CD4-positive, alpha-beta memory T cell (primary cell): ENCODE measurements at regions of chr1 and their contacts with region 1.

Region 1: GRCh38 chr1:151399890-151400495 is 620 bp downstream of the PSMB4 start:
- DNase-seq: peak in 2 of 5 donors; percentile 22 to 41
- H3K4me3 ChIP-seq: peak overlapping the region; percentile 80 to 85
- H3K4me3 Mint-ChIP-seq: peak overlapping the region; percentile 90 to 99 (median 95)
- H3K27ac ChIP-seq: peak overlapping the region; percentile 97
- H3K27ac Mint-ChIP-seq: peak overlapping the region; percentile 86 to 100 (median 99)
- H3K4me1 ChIP-seq: peaks cover 23% of the 10 kb centered on the region
- H3K4me1 Mint-ChIP-seq: peaks cover 14 to 31% (median 18%) of the 10 kb centered on the region in 4 donors
- H3K27me3 ChIP-seq: no peaks in the 10 kb centered on the region
- H3K27me3 Mint-ChIP-seq: no peaks in the 10 kb centered on the region

Region 2: DNA sequence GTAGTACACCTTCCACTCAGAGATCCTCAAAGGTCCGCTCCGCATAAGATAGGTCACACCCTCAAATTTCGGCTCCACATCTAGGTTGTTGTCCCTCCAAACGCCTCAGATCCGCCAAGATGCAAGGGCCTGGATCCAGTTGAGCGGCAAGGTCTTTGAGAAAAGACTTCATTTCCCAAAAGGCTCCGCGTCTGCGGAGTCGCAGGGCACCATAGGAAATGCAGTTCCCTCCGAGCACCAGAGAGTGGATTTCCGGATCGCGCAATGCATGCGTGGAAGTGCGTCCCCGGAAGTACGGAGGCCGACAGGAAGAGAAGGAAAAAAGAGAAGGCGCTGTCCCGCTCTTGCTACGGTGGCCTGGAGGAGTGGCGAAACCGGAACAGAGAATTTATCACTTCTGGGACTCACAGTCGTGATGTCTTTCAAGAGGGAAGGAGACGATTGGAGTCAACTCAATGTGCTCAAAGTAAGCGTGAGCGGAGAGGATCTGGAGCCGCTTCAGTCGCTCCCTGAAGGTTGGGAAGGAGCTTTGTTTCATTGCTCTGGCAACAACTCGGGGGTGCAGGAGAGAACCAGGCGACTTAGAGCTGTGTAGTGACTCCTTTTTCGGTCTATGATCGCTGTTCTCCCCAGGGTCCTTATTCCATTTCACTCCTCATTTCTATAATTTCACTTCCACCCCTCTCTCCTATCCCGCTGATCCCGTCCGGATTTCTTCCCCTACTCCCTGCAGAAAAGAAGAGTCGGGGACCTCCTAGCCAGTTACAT is 234.1 kb before region 1 on chr1 and contains the starts of genes LYSMD1 and SCNM1:
- CTCF ChIA-PET with region 1: no interaction called
- POLR2A ChIA-PET with region 1: no interaction called
- intact Hi-C with region 1: no loop called
- DNase-seq: peak; percentile 97 to 98 (median 97)
- H3K4me3 ChIP-seq: peak within 1 kb of the TSS; percentile 91 to 99
- H3K4me3 Mint-ChIP-seq: peak within 1 kb of the TSS; percentile 94 to 100 (median 98)
- H3K27ac ChIP-seq: peak within 1 kb of the TSS; percentile 73
- H3K27ac Mint-ChIP-seq: peak within 1 kb of the TSS; percentile 93 to 99 (median 98)
- H3K4me1 ChIP-seq: peaks cover 42% of the 10 kb centered on the region
- H3K4me1 Mint-ChIP-seq: peaks cover 29 to 62% (median 47%) of the 10 kb centered on the region in 4 donors
- H3K27me3 ChIP-seq: no peaks in the 10 kb centered on the region
- H3K27me3 Mint-ChIP-seq: peaks cover 2% of the 10 kb centered on the region in 2 donors
- total RNA-seq, gene LYSMD1: 1.0 to 1.3 TPM
- total RNA-seq, gene SCNM1: 57.4 to 61.4 TPM

Region 3: GRCh38 chr1:151198255-151199127 is 201.5 kb before region 1 on chr1 and contains the start of gene PIP5K1A:
- CTCF ChIA-PET with region 1: no interaction called
- POLR2A ChIA-PET with region 1: no interaction called
- intact Hi-C with region 1: loop called (anchors 10 kb)
- DNase-seq: peak; percentile 96 to 99 (median 98)
- H3K4me3 ChIP-seq: peak within 1 kb of the TSS; percentile 89 to 99
- H3K4me3 Mint-ChIP-seq: peak within 1 kb of the TSS; percentile 96 to 100 (median 98)
- H3K27ac ChIP-seq: peak within 1 kb of the TSS; percentile 79
- H3K27ac Mint-ChIP-seq: peak within 1 kb of the TSS; percentile 93 to 100 (median 97)
- H3K4me1 ChIP-seq: peaks cover 34% of the 10 kb centered on the region
- H3K4me1 Mint-ChIP-seq: peaks cover 29 to 53% (median 41%) of the 10 kb centered on the region in 4 donors
- H3K27me3 ChIP-seq: no peaks in the 10 kb centered on the region
- H3K27me3 Mint-ChIP-seq: peaks cover 0 to 2% of the 10 kb centered on the region in 2 donors
- total RNA-seq, gene PIP5K1A: 50.8 to 53.1 TPM

Region 4: DNA sequence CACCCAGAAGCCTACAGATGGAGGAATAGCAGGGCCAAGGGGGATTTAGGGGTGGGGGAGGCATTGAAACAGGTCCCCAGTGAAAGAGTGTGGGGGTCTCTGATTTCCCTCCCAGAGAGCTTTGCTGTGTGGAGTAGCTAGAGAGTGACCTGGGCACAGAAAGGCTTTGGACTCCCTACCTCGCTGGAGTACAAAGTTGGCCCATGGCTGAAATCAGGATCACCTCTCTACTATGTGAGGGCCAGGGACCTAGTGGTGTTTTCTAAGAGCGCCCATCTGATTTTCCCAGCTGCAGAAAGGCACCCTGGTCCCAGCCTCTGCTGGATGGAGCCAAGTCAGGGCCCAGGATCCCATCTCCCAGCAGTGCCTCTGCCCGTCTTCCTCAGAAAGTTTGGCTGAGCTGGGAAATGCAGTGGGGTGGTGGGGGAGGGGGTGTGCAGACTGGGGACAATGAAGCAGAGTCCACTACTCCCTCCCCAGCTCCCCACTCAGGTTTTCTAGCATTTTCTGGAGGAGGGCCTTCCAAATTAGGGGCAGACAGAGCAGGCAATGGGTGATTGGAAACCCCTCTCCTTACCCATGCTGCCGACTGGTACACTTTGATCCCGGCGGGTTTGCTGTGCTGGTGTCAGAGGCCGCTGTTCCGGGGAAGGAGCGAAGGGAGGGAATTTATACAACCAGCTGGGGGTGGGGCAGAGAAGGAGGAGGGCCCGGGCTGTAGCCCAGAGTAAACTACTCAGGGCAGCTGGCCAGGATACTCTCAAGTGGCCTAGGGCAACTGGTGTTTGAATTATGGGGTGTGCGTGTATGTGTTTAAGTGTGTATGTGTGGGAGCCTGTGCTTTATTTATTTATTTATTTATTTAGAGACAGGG is 27.7 kb before region 1 on chr1 and contains the start of gene SELENBP1:
- CTCF ChIA-PET with region 1: no interaction called
- POLR2A ChIA-PET with region 1: no interaction called
- intact Hi-C with region 1: no loop called
- DNase-seq: no peak
- H3K4me3 ChIP-seq: no peak within 1 kb of the TSS
- H3K4me3 Mint-ChIP-seq: no peak within 1 kb of the TSS
- H3K27ac ChIP-seq: no peak within 1 kb of the TSS
- H3K27ac Mint-ChIP-seq: peak within 1 kb of the TSS in 2 of 7 donors; percentile 48 to 50
- H3K4me1 ChIP-seq: no peaks in the 10 kb centered on the region
- H3K4me1 Mint-ChIP-seq: no peaks in the 10 kb centered on the region
- H3K27me3 ChIP-seq: no peaks in the 10 kb centered on the region
- H3K27me3 Mint-ChIP-seq: peaks cover 3 to 10% of the 10 kb centered on the region in 2 donors
- total RNA-seq, gene SELENBP1: not detected

Region 5: GRCh38 chr1:151411884-151412283 is 11.9 kb after region 1 on chr1:
- CTCF ChIA-PET with region 1: interaction called, 3 read pairs
- POLR2A ChIA-PET with region 1: interaction called, 12 read pairs
- intact Hi-C with region 1: no loop called
- DNase-seq: no peak
- H3K4me3 ChIP-seq: no peak overlapping the region
- H3K4me3 Mint-ChIP-seq: no peak overlapping the region
- H3K27ac ChIP-seq: no peak overlapping the region
- H3K27ac Mint-ChIP-seq: peak overlapping the region in 1 of 7 donors; percentile 48
- H3K4me1 ChIP-seq: no peaks in the 10 kb centered on the region
- H3K4me1 Mint-ChIP-seq: no peaks in the 10 kb centered on the region
- H3K27me3 ChIP-seq: no peaks in the 10 kb centered on the region
- H3K27me3 Mint-ChIP-seq: no peaks in the 10 kb centered on the region

Region 6: DNA sequence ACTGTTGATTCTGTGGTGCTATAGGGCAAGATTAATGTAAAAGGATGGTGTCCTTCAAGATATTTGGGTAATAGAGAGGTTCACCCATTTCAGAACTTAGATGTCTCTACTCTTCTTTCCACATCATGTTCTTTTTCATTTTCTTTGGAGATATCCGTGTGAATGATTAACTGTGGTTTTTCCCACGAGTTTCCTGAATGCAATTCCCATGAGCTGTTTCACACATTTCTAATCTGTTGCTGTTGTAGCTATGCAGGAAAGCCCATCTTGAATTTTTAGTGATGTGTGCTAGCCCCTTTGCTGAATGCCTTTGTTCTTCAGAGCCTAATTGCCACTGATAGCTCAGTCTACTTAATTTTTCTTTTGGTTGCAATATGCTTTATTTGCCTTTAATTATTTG is 239.5 kb after region 1 on chr1:
- CTCF ChIA-PET with region 1: no interaction called
- POLR2A ChIA-PET with region 1: no interaction called
- intact Hi-C with region 1: no loop called
- DNase-seq: no peak
- H3K4me3 ChIP-seq: no peak overlapping the region
- H3K4me3 Mint-ChIP-seq: no peak overlapping the region
- H3K27ac ChIP-seq: no peak overlapping the region
- H3K27ac Mint-ChIP-seq: peak overlapping the region in 2 of 7 donors; percentile 6 to 8
- H3K4me1 ChIP-seq: no peaks in the 10 kb centered on the region
- H3K4me1 Mint-ChIP-seq: peaks cover 5 to 13% (median 8%) of the 10 kb centered on the region in 4 donors
- H3K27me3 ChIP-seq: no peaks in the 10 kb centered on the region
- H3K27me3 Mint-ChIP-seq: no peaks in the 10 kb centered on the region

Region 7: DNA sequence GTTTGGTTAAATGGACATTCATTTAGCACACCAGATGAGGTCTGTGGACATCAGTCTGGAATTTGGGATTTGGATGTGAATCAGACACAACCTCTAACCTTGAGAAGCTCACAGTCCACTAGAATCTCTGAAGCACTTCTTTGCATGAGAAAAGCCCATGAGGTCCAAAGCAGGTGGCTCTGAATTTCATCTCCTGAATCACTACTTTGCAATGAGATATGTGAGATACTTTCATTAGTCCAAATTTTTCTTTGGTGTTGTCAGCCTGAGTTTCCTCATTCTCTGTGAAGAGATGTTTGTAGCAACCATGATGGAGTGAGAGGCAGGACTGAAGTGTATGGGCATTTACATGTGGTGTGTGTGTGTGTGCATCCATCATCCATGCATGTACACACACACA is 1246.7 kb after region 1 on chr1:
- CTCF ChIA-PET with region 1: no interaction called
- POLR2A ChIA-PET with region 1: no interaction called
- intact Hi-C with region 1: no loop called
- DNase-seq: no peak
- H3K4me3 ChIP-seq: no peak overlapping the region
- H3K4me3 Mint-ChIP-seq: no peak overlapping the region
- H3K27ac ChIP-seq: no peak overlapping the region
- H3K27ac Mint-ChIP-seq: no peak overlapping the region
- H3K4me1 ChIP-seq: no peaks in the 10 kb centered on the region
- H3K4me1 Mint-ChIP-seq: no peaks in the 10 kb centered on the region
- H3K27me3 ChIP-seq: peaks cover 9% of the 10 kb centered on the region
- H3K27me3 Mint-ChIP-seq: peaks cover 15 to 16% of the 10 kb centered on the region in 2 donors